BJ (cell line): ENCODE measurements at regions of chr18 and their contacts with region 1.

Region 1: GRCh38 chr18:12726774-12727550 is 24.1 kb downstream of the PSMG2 start:
- DNase-seq: no peak
- H3K4me3 ChIP-seq: no peak overlapping the region
- H3K27me3 ChIP-seq: no peaks in the 10 kb centered on the region
- CTCF ChIP-seq: peak; percentile 86

Region 2: GRCh38 chr18:12737243-12737902 is 10.4 kb after region 1 on chr18:
- CTCF ChIA-PET with region 1: interaction called, 32 read pairs
- POLR2A ChIA-PET with region 1: no interaction called
- DNase-seq: no peak
- H3K4me3 ChIP-seq: no peak overlapping the region
- H3K27me3 ChIP-seq: no peaks in the 10 kb centered on the region
- CTCF ChIP-seq: no peak

Region 3: DNA sequence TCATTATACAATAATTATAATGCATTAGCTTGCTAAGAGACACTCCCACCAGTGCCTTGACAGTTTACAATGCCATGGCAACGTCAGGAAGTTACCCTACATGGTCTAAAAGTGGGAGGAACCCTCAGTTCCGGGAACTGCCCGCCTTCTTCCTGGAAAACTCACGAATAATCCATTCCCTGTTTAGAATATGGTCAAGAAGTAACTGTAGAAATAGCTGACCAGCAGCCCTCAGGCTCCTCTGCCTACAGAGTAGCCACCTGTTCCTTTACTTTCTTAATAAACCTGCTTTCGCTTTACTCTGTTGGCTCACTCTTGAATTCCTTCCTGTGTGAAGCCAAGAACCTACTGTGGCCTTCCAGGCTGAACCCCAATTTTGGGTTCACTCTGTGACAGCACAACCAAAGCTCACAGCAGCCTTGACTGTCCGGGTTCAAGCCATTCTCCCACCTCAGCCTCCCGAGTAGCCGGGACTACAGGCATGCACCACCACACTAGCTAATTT is 177.1 kb after region 1 on chr18:
- CTCF ChIA-PET with region 1: interaction called, 13 read pairs
- POLR2A ChIA-PET with region 1: no interaction called
- DNase-seq: no peak
- H3K4me3 ChIP-seq: no peak overlapping the region
- H3K27me3 ChIP-seq: 0 out of 2 replicates have a peak, but pooled peaks cover 1% of the 10 kb centered on the region
- CTCF ChIP-seq: no peak

Region 4: DNA sequence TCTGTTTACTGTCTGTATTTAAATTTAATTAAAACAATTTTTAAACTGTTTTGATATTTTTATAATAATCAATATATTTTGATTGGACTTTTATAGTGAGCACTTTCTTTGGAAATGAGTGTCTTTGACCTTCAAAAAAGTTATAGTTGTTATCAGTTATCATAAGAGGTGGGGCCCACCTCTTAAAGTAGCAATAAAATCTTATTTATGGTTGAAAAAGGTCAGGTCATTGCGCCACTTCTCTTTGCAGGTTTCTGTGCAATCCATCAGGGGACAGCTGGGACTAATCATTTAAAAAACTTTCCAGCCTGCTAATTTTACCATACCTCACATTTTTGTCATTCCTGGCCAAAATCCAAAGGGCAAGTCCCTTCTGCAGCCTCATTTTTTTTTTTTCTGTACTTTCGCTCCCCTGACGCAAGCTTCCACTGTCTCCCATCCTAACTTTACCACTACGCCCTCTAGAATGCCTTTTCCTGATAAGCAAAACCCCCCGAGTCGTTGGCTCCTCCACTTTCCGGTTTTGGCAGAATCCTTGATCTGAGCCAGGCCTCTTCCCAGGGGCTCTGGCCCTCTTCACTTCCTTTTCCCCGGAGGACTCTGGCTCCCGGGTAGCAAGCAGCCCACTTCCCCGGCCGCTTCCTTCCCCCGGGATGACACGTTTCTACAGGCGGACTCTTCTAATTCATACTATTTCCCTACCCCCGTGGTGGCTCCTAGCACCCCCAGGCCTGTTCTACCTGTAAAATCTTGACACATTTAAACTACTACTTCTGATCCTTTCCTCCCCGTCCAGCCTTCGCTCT is 219.8 kb after region 1 on chr18:
- CTCF ChIA-PET with region 1: interaction called, 14 read pairs
- POLR2A ChIA-PET with region 1: no interaction called
- DNase-seq: peak; percentile 84
- H3K4me3 ChIP-seq: peak overlapping the region; percentile 85
- H3K27me3 ChIP-seq: no peaks in the 10 kb centered on the region
- CTCF ChIP-seq: peak; percentile 37; the same call in 1 of the 2 replicates